ENCODE measurements at regions of chr7 and their contacts with region 1.

Region 1: DNA sequence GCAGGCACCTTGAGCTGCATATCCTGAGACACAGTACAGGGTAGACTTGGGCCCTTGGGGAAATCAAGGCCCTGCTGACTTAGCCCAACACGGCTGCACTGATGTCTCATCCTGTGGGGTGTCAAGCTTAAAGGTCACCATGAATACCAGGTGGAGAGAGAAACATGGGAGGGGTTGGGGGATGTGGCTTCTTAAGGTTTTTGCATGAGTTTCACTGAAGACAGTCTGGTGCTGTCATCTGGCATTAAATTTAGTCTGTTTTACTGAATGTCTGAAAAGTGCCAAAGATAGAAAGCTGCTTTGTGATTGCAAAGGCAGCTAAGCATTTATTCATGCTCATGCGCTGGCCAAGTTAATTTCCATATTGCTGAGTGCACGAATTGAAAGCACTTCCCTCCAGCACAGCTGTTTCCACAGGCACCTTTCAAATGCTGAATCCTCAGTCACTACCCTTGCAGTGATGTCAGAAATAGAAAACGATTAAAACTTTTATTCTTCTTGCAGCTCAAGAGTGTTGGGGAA is 102.1 kb downstream of the OSBPL3 start:
- DNase-seq: peak; percentile 62
- ATAC-seq: peak; percentile 88
- H3K4me3 ChIP-seq: no peak overlapping the region; the same call in 1 of the 2 replicates
- H3K27ac ChIP-seq: peak overlapping the region; percentile 5; the same call in 1 of the 2 replicates
- H3K4me1 ChIP-seq: peaks cover 16% of the 10 kb centered on the region
- H3K27me3 ChIP-seq: no peaks in the 10 kb centered on the region
- CTCF ChIP-seq: no peak
- EP300 ChIP-seq: no peak
- POLR2A ChIP-seq: no peak
- RAD21 ChIP-seq: no peak

Region 2: GRCh38 chr7:24842449-24843241 is 35.2 kb before region 1 on chr7:
- CTCF ChIA-PET with region 1: interaction called, 5 read pairs
- POLR2A ChIA-PET with region 1: interaction called, 3 read pairs
- RAD21 ChIA-PET with region 1: interaction called, 4 read pairs
- SMC1A ChIA-PET with region 1: interaction called, 19 read pairs
- in situ Hi-C with region 1: no loop called
- intact Hi-C with region 1: no loop called
- DNase-seq: no peak
- ATAC-seq: peak; percentile 86
- H3K4me3 ChIP-seq: no peak overlapping the region
- H3K27ac ChIP-seq: peak overlapping the region; percentile 64; the same call in 1 of the 2 replicates
- H3K4me1 ChIP-seq: peaks cover 20% of the 10 kb centered on the region
- H3K27me3 ChIP-seq: no peaks in the 10 kb centered on the region
- CTCF ChIP-seq: no peak
- EP300 ChIP-seq: peak; percentile 37 to 72; a peak in 2 of 4 replicates
- POLR2A ChIP-seq: no peak
- RAD21 ChIP-seq: no peak

Region 3: DNA sequence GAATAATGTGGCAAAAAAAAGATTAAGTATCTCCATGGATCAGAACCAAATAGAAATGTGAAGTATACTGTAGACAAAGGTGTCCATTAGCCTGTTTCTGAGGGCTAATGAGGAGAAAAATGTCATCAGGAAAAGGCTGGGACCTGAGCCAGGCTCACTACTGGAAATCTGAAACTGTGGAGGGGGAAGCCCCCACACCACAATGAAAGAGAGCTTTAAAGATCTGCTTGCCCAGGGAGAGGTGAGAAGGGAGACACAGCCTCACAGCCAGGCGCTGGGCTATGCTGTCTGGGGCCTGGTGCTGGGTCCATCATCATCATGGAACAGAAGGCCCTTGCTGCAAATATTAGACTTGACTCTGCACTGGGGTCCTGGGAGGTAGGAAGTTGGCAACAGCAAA is 11.8 kb after region 1 on chr7:
- CTCF ChIA-PET with region 1: interaction called, 38 read pairs
- POLR2A ChIA-PET with region 1: interaction called, 12 read pairs
- RAD21 ChIA-PET with region 1: interaction called, 23 read pairs
- SMC1A ChIA-PET with region 1: interaction called, 61 read pairs
- in situ Hi-C with region 1: no loop called
- intact Hi-C with region 1: no loop called
- DNase-seq: no peak
- ATAC-seq: peak; percentile 56
- H3K4me3 ChIP-seq: no peak overlapping the region
- H3K27ac ChIP-seq: no peak overlapping the region
- H3K4me1 ChIP-seq: peaks cover 20% of the 10 kb centered on the region
- H3K27me3 ChIP-seq: no peaks in the 10 kb centered on the region
- CTCF ChIP-seq: no peak
- EP300 ChIP-seq: no peak
- POLR2A ChIP-seq: no peak
- RAD21 ChIP-seq: no peak

Region 4: GRCh38 chr7:24896031-24896501 is 18.2 kb after region 1 on chr7:
- CTCF ChIA-PET with region 1: interaction called, 38 read pairs
- POLR2A ChIA-PET with region 1: interaction called, 12 read pairs
- RAD21 ChIA-PET with region 1: interaction called, 23 read pairs
- SMC1A ChIA-PET with region 1: interaction called, 61 read pairs
- in situ Hi-C with region 1: no loop called
- intact Hi-C with region 1: no loop called
- DNase-seq: peak; percentile 52
- ATAC-seq: peak; percentile 70
- H3K4me3 ChIP-seq: no peak overlapping the region
- H3K27ac ChIP-seq: peak overlapping the region; percentile 75
- H3K4me1 ChIP-seq: peaks cover 57% of the 10 kb centered on the region
- H3K27me3 ChIP-seq: no peaks in the 10 kb centered on the region
- CTCF ChIP-seq: peak in 1 of 3 experiments; percentile 45; a peak in 2 of 6 replicates
- EP300 ChIP-seq: peak; percentile 55 to 79; a peak in 3 of 4 replicates
- POLR2A ChIP-seq: no peak
- RAD21 ChIP-seq: peak; percentile 40; the same call in 1 of the 2 replicates